ENCODE measurements at regions of chr11 and their contacts with region 1.

Region 1: GRCh38 chr11:33257897-33258630 is 883 bp downstream of the HIPK3 start:
- DNase-seq: peak; percentile 63
- ATAC-seq: peak; percentile 74
- H3K4me3 ChIP-seq: peak overlapping the region; percentile 98 to 100 (median 99)
- H3K27ac ChIP-seq: peak overlapping the region; percentile 98
- H3K4me1 ChIP-seq: peaks cover 42% of the 10 kb centered on the region
- H3K27me3 ChIP-seq: no peaks in the 10 kb centered on the region; a peak in 2 of 5 replicates
- CTCF ChIP-seq: peak; percentile 46
- EP300 ChIP-seq: no peak
- POLR2A ChIP-seq: peak; percentile 56 to 80
- RAD21 ChIP-seq: peak; percentile 28; the same call in 1 of the 2 replicates

Region 2: GRCh38 chr11:32884770-32885384 is 373.2 kb before region 1 on chr11:
- CTCF ChIA-PET with region 1: no interaction called
- POLR2A ChIA-PET with region 1: no interaction called
- in situ Hi-C with region 1: no loop called
- intact Hi-C with region 1: no loop called
- DNase-seq: no peak
- ATAC-seq: peak; percentile 85
- H3K4me3 ChIP-seq: no peak overlapping the region
- H3K27ac ChIP-seq: no peak overlapping the region
- H3K4me1 ChIP-seq: no peaks in the 10 kb centered on the region
- H3K27me3 ChIP-seq: no peaks in the 10 kb centered on the region
- CTCF ChIP-seq: peak; percentile 47
- EP300 ChIP-seq: no peak
- POLR2A ChIP-seq: no peak
- RAD21 ChIP-seq: no peak

Region 3: GRCh38 chr11:33211580-33211979 is 46.5 kb before region 1 on chr11:
- CTCF ChIA-PET with region 1: no interaction called
- POLR2A ChIA-PET with region 1: no interaction called
- in situ Hi-C with region 1: no loop called
- intact Hi-C with region 1: loop called (anchors 5 kb)
- DNase-seq: peak; percentile 89
- ATAC-seq: peak; percentile 87
- H3K4me3 ChIP-seq: no peak overlapping the region
- H3K27ac ChIP-seq: no peak overlapping the region
- H3K4me1 ChIP-seq: peaks cover 24% of the 10 kb centered on the region
- H3K27me3 ChIP-seq: no peaks in the 10 kb centered on the region
- CTCF ChIP-seq: no peak
- EP300 ChIP-seq: peak; percentile 45 to 54; a peak in 2 of 4 replicates
- POLR2A ChIP-seq: no peak
- RAD21 ChIP-seq: no peak